Mammary epithelial cell (primary cell): ENCODE measurements at regions of chr11 and their contacts with region 1.

Region 1: GRCh38 chr11:16881074-16881709 is 133.0 kb downstream of the PLEKHA7 start:
- DNase-seq: peak; percentile 89
- H3K4me3 ChIP-seq: no peak overlapping the region
- H3K27ac ChIP-seq: peak overlapping the region; percentile 58
- H3K4me1 ChIP-seq: peaks cover 60% of the 10 kb centered on the region
- H3K27me3 ChIP-seq: no peaks in the 10 kb centered on the region
- CTCF ChIP-seq: peak; percentile 38 to 68

Region 2: DNA sequence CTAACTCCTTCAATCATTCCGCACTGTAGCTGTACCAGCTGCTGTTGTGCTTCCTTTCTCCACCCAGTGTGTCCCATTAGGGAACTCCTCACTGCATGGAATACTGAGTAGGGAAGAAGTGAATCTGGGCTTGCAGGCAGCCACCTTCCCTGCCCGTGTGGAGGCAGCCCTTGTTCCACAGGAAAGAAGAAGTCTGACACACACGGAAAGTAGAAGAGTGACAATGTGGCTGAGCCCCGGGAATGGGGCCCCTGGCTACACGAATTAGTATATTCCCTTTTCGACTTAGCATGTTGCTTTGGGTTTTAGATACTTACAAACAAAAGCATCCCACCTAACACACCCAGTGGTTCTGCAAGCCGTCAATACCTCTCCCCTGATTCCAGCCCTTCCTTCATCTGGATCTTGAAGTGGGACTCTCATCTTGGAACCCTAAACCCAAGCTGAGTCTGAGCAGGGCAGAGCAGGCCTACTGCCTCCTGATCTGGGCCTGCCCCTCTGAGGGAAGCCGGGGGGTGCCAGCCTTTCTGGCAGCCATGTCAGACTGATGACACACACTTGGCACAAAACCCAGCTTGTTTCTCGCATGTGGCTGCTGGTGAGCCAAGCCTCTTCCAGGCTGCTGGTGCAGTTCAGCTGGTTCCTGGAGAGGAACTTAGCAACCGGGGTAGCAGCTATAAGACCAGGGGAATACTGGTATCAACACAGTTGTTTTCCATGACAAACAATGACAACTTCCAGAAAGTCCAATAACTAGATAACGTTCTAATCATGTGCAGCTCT is 71.1 kb before region 1 on chr11:
- CTCF ChIA-PET with region 1: no interaction called
- dilution Hi-C with region 1: loop called (anchors 5 kb)
- in situ Hi-C with region 1: no loop called
- intact Hi-C with region 1: no loop called
- DNase-seq: peak; percentile 63
- H3K4me3 ChIP-seq: no peak overlapping the region
- H3K27ac ChIP-seq: no peak overlapping the region
- H3K4me1 ChIP-seq: peaks cover 9% of the 10 kb centered on the region
- H3K27me3 ChIP-seq: no peaks in the 10 kb centered on the region
- CTCF ChIP-seq: no peak

Region 3: DNA sequence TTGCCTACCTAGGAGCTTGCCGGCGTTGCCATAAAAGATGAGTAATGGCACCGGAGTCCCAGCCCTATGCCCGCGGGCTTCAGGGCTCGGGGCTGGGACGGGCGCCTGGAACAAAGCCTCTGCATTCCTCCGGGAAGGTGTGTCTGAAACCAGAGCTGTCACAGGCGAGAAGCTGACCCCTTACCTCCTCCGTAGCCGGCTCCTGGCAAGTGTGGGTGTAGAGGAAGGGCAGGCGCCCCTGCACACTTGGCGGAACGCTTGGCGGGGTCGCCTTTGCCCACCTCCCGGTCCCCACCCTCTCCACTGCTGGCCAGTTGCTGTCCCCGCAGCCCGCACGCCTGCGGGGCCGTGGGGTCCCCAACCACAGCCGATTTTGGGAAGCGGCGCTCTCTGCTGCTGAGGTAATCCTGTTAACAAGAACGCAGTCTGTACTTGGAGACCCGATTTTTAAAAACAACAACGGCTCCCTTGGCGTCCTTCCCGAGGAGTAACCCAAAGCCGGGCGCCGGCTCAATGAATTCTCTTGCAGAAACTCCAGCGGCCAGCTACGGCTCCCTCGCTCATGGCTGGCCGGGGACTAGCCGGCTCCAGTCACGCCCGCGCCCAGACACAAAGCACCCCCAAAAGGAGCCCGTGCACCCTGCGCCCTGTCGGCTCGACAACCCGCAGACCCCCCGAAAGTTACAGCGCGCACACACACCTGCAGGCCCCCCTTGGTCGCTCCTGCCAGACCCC is 43.8 kb after region 1 on chr11:
- CTCF ChIA-PET with region 1: interaction called, 5 read pairs
- dilution Hi-C with region 1: no loop called
- in situ Hi-C with region 1: no loop called
- intact Hi-C with region 1: loop called (anchors 2 kb)
- DNase-seq: peak; percentile 84
- H3K4me3 ChIP-seq: peak overlapping the region; percentile 65 to 82 (median 72)
- H3K27ac ChIP-seq: peak overlapping the region; percentile 70
- H3K4me1 ChIP-seq: peaks cover 31% of the 10 kb centered on the region
- H3K27me3 ChIP-seq: no peaks in the 10 kb centered on the region
- CTCF ChIP-seq: no peak